ENCODE measurements at regions of chrX and their contacts with region 1.

Region 1: GRCh38 chrX:69387567-69388487 is 116.3 kb upstream of the NALF2 start:
- DNase-seq: peak; percentile 54 to 66 (median 62)
- ATAC-seq: peak; percentile 92
- H3K4me3 ChIP-seq: no peak overlapping the region
- H3K27ac ChIP-seq: no peak overlapping the region
- H3K4me1 ChIP-seq: no peaks in the 10 kb centered on the region
- H3K27me3 ChIP-seq: no peaks in the 10 kb centered on the region
- CTCF ChIP-seq: peak; percentile 61 to 78 (median 70)
- EP300 ChIP-seq: no peak
- POLR2A ChIP-seq: no peak
- RAD21 ChIP-seq: peak; percentile 37 to 68; a peak in 3 of 4 replicates

Region 2: DNA sequence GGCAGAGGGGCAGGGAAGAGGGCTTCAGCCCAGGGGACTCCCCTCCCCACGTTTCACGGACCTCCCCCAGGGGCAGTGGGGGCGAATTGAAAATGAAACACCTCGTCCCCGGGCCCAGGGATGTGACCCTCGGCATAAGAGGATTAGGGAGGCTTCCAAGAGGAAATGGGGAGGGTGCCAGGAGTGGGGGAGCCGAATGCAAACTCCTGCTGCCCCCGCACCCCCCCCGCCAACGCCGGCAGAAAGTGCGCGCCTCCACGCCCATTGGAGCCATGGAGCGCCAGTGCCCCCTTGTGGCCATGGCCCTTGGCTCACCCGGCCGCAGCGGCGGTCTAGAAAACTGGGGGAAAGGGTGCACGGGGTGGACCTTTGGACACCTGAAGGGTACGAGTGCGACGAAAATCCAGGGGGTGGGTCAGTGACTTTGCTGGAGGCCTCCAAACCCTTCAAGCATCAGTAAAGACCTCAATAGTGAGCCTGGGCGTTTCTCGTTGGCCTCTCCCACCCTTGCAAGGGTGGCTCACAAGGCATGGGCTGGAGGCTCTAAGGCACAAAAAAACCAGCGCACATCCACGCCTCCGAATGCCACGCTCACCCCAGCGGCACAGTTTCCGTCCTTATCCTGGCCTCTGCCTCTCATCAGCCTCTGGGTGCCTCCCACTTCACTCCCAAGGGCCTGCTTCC is 101.8 kb before region 1 on chrX:
- CTCF ChIA-PET with region 1: no interaction called
- POLR2A ChIA-PET with region 1: no interaction called
- in situ Hi-C with region 1: no loop called
- intact Hi-C with region 1: loop called (anchors 5 kb)
- DNase-seq: peak; percentile 53 to 81 (median 74)
- ATAC-seq: peak; percentile 96
- H3K4me3 ChIP-seq: no peak overlapping the region
- H3K27ac ChIP-seq: no peak overlapping the region
- H3K4me1 ChIP-seq: peaks cover 0 to 7% of the 10 kb centered on the region in 2 experiments; a peak in 2 of 5 replicates
- H3K27me3 ChIP-seq: peaks cover 0 to 6% of the 10 kb centered on the region in 2 experiments; a peak in 1 of 5 replicates
- CTCF ChIP-seq: peak; percentile 63 to 81 (median 74)
- EP300 ChIP-seq: no peak
- POLR2A ChIP-seq: no peak
- RAD21 ChIP-seq: peak; percentile 53 to 68

Region 3: DNA sequence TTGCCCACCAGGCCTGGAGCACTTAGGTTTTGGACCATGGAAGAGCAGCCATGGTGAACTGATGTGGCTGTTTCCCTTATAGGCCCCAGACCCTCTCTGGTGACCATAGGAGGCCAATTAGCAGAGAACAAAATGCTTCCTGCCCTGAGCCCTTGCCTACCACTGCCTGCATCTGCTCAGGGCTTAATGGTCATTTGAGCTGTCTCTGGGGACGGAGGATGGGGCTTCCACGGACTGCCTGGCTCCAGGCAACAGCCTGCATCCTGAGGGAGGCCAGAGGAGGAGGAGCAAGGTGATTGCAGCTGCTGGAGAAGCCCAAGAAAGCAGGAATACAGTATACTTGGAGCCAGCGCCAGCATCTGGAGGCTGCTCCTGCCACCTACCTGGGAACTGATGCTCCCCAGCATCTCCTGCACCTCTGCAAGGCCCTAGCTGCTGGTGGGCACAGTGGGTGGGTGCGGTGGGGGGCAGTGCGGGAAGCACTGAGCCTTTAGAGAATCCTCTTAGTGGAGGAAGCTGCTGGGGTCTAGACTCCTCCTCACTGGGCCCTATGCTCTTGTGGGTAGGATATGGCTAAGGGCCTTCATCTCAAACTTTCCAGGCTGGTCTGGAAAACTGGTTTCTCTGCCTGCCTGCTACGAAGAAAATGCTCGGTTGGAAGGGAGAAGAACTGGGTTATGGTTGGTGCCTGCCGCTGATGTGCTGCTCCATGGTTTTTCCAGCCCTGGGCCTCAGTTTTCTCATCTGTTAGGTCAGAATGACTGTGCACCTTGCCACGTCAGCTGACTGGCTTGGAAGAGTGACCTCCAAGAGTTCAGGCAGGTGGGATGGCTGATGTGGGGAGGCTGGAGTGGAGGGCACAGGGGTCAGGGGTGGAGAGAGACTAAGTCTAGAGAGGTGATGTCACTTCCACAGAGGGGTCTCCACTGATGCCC is 63.8 kb before region 1 on chrX:
- CTCF ChIA-PET with region 1: no interaction called
- POLR2A ChIA-PET with region 1: no interaction called
- in situ Hi-C with region 1: no loop called
- intact Hi-C with region 1: no loop called
- DNase-seq: peak in 2 of 4 experiments; percentile 0 to 1
- ATAC-seq: no peak
- H3K4me3 ChIP-seq: no peak overlapping the region
- H3K27ac ChIP-seq: no peak overlapping the region
- H3K4me1 ChIP-seq: no peaks in the 10 kb centered on the region
- H3K27me3 ChIP-seq: no peaks in the 10 kb centered on the region
- CTCF ChIP-seq: no peak
- EP300 ChIP-seq: no peak
- POLR2A ChIP-seq: no peak
- RAD21 ChIP-seq: no peak

Region 4: DNA sequence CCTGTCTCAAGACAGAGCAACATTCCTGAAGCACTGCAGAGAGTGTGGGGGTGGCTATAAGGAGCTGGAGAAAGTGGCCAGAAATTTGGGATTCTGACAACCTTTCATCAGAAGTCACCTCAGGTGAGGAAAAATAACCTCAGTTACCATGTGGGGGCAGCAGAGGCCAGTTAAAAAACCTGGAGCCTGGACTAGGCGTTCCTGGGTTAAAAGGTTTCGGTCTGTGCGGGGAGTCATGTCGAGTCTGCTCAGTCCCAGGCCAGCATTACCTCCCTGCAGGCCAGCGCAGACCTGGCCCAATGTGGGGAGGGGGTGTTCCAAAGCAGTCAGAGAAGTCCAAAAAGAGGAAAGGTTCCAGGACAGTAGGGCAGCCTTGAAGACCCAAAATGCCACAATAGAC is 105.4 kb after region 1 on chrX:
- CTCF ChIA-PET with region 1: no interaction called
- POLR2A ChIA-PET with region 1: no interaction called
- in situ Hi-C with region 1: no loop called
- intact Hi-C with region 1: no loop called
- DNase-seq: peak; percentile 18 to 44 (median 32)
- ATAC-seq: peak; percentile 83
- H3K4me3 ChIP-seq: no peak overlapping the region
- H3K27ac ChIP-seq: no peak overlapping the region
- H3K4me1 ChIP-seq: no peaks in the 10 kb centered on the region; a peak in 1 of 5 replicates
- H3K27me3 ChIP-seq: no peaks in the 10 kb centered on the region
- CTCF ChIP-seq: peak; percentile 38 to 59 (median 48); a peak in 5 of 6 replicates
- EP300 ChIP-seq: no peak
- POLR2A ChIP-seq: no peak
- RAD21 ChIP-seq: peak in 1 of 2 experiments; percentile 52; a peak in 3 of 4 replicates

Measured in K562 (cell line).